ENCODE measurements at regions of chr7 and their contacts with region 1.

Region 1: GRCh38 chr7:816300-816750 is 16.0 kb upstream of the SUN1 start:
- DNase-seq: peak; percentile 93
- ATAC-seq: peak; percentile 85
- H3K4me3 ChIP-seq: peak overlapping the region; percentile 53 to 93 (median 90); a peak in 4 of 6 replicates
- H3K27ac ChIP-seq: no peak overlapping the region
- H3K4me1 ChIP-seq: peaks cover 81% of the 10 kb centered on the region
- H3K27me3 ChIP-seq: no peaks in the 10 kb centered on the region; a peak in 1 of 5 replicates
- CTCF ChIP-seq: no peak
- EP300 ChIP-seq: no peak
- POLR2A ChIP-seq: peak; percentile 38 to 73; a peak in 3 of 4 replicates
- RAD21 ChIP-seq: no peak

Region 2: GRCh38 chr7:786472-787255 is 29.7 kb before region 1 on chr7:
- CTCF ChIA-PET with region 1: no interaction called
- POLR2A ChIA-PET with region 1: interaction called, 3 read pairs
- in situ Hi-C with region 1: no loop called
- intact Hi-C with region 1: loop called (anchors 1 kb)
- DNase-seq: peak; percentile 39
- ATAC-seq: peak; percentile 83
- H3K4me3 ChIP-seq: no peak overlapping the region
- H3K27ac ChIP-seq: no peak overlapping the region
- H3K4me1 ChIP-seq: no peaks in the 10 kb centered on the region
- H3K27me3 ChIP-seq: no peaks in the 10 kb centered on the region
- CTCF ChIP-seq: peak; percentile 93
- EP300 ChIP-seq: no peak
- POLR2A ChIP-seq: no peak
- RAD21 ChIP-seq: peak; percentile 71; the same call in 1 of the 2 replicates

Region 3: DNA sequence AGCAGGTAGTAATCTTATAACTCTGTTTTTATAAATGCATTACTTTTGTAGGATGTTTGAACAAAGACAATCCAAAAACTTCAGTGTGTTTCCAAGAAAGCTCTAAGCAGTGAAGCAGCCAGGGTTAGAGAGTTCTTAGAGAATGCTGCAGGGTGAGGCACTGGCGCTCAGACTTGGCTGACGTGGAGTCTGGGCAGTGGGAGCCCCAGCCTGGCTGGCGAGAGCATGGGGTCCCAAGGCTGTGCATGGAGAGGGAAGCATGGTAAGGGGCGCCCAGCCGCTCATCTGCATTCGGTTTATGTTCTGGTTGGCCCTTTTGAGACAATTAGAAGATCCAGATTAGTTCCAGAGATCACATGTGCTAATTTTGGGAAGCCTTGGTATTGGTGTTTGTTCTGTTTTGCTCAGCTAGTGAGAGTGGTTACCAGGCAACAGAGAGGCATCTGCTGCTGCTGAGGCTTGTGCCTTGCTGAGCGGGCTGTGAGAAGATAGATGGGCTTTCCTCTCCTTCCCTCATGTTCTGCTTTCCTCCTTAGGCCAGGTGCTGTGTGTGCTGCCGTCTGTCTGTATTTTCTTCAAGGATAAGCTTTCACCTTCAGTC is 26.2 kb after region 1 on chr7:
- CTCF ChIA-PET with region 1: no interaction called
- POLR2A ChIA-PET with region 1: no interaction called
- in situ Hi-C with region 1: no loop called
- intact Hi-C with region 1: no loop called
- DNase-seq: no peak
- ATAC-seq: no peak
- H3K4me3 ChIP-seq: no peak overlapping the region
- H3K27ac ChIP-seq: no peak overlapping the region
- H3K4me1 ChIP-seq: no peaks in the 10 kb centered on the region
- H3K27me3 ChIP-seq: no peaks in the 10 kb centered on the region
- CTCF ChIP-seq: no peak
- EP300 ChIP-seq: no peak
- POLR2A ChIP-seq: no peak
- RAD21 ChIP-seq: no peak

Region 4: DNA sequence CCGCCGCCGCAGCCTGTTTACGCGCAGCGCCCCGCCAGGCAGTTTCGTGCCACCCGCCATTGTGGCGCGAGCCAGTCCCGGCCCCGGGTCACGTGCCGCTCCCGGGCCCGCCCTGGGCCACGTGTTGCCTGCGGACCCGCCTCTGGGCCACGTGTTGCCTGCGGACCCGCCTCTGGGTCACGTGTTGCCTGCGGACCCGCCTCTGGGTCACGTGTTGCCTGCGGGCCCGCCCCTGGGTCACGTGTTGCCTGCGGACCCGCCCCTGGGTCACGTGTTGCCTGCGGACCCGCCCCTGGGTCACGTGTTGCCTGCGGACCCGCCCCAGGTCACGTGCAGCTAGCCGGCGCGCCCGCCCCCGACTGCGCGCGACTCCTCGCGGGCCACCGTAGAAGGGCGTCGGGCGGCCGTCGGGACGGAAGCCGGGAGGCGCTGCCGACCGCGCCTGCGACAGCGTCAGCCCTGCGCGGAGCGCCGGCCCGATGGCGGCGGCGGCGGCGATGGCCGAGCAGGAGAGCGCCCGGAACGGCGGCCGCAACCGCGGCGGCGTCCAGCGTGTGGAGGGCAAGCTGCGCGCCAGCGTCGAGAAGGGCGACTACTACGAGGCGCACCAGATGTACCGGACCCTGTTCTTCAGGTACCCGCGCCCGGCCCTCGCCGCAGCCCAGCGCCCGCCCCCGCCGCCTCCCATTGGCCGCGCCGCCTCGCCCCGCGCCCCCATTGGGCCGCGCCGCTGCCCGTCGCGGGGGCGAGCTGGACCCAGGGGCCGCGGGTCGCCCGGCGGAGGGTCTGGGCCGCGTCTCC is 60.0 kb after region 1 on chr7 and contains the start of gene GET4:
- CTCF ChIA-PET with region 1: no interaction called
- POLR2A ChIA-PET with region 1: no interaction called
- in situ Hi-C with region 1: no loop called
- intact Hi-C with region 1: loop called (anchors 10 kb)
- DNase-seq: peak; percentile 65
- ATAC-seq: peak; percentile 88
- H3K4me3 ChIP-seq: peak within 1 kb of the TSS; percentile 73 to 98 (median 86)
- H3K27ac ChIP-seq: peak within 1 kb of the TSS; percentile 83
- H3K4me1 ChIP-seq: peaks cover 41% of the 10 kb centered on the region
- H3K27me3 ChIP-seq: no peaks in the 10 kb centered on the region
- CTCF ChIP-seq: no peak; the same call in 1 of the 2 replicates
- EP300 ChIP-seq: 0 out of 4 replicates have a peak, but pooled peaks of 1 of the 2 experiments have one; percentile 16
- POLR2A ChIP-seq: peak; percentile 58 to 67
- RAD21 ChIP-seq: peak; percentile 53
- total RNA-seq, gene GET4: 28.2 and 31.6 TPM in 2 replicates

Region 5: GRCh38 chr7:1459522-1459892 is 643.2 kb after region 1 on chr7:
- CTCF ChIA-PET with region 1: no interaction called
- POLR2A ChIA-PET with region 1: no interaction called
- in situ Hi-C with region 1: no loop called
- intact Hi-C with region 1: loop called (anchors 5 kb)
- DNase-seq: peak; percentile 94
- ATAC-seq: peak; percentile 70
- H3K4me3 ChIP-seq: peak overlapping the region; percentile 67 to 86 (median 86); a peak in 5 of 6 replicates
- H3K27ac ChIP-seq: peak overlapping the region; percentile 64
- H3K4me1 ChIP-seq: peaks cover 73% of the 10 kb centered on the region
- H3K27me3 ChIP-seq: no peaks in the 10 kb centered on the region
- CTCF ChIP-seq: no peak
- EP300 ChIP-seq: no peak
- POLR2A ChIP-seq: no peak
- RAD21 ChIP-seq: no peak

Region 6: GRCh38 chr7:1812509-1813393 is 996.4 kb after region 1 on chr7:
- CTCF ChIA-PET with region 1: no interaction called
- POLR2A ChIA-PET with region 1: no interaction called
- in situ Hi-C with region 1: no loop called
- intact Hi-C with region 1: no loop called
- DNase-seq: peak; percentile 30
- ATAC-seq: peak; percentile 88
- H3K4me3 ChIP-seq: no peak overlapping the region; a peak in 1 of 6 replicates
- H3K27ac ChIP-seq: peak overlapping the region; percentile 51
- H3K4me1 ChIP-seq: peaks cover 51% of the 10 kb centered on the region
- H3K27me3 ChIP-seq: no peaks in the 10 kb centered on the region
- CTCF ChIP-seq: peak; percentile 76
- EP300 ChIP-seq: no peak
- POLR2A ChIP-seq: no peak
- RAD21 ChIP-seq: no peak